Left colon (tissue), 2 donors: ENCODE measurements at regions of chr14 and their contacts with region 1.

Region 1: DNA sequence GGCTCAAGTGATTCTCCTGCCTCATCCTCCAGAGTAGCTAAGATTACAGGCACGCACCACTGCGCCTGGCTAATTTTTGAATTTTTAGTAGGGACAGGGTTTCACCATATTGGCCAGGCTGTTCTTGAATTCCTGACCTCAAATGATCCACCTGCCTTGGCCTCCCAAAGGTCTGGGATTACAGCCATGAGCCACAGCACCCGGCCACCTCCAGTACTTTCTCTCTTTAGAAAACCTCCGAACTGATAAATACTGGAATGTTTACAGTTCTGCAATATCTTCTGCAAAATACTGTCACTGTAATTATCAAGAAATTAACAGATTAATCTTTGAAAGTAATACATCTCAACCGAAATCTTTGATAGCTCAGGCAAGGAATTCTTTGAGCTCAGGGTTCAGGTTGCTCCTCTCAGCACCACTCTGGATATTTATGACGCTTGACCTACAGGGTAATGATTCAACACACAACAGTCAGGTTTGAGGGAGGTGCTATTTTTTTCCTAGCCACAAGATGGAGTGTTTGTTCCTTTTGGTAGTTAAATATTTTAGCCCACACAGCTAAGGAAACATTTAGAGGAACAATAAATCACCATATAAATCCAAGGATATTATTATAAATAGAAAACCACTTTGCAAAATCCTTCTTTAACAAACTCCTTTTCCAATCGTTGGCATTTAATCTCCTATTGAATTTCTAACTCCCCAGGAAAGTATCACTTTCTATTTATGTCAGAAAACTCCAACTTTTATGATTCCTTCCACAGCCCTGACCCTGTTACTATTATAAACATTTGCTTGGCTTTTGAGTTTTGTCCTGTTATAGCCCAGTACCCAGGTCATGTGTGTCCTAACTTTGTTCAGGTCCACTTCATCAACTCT is 48.6 kb upstream of the GTF2A1 start:
- DNase-seq: no peak
- ATAC-seq: peak; percentile 94

Region 2: GRCh38 chr14:81187832-81188522 is 81.4 kb before region 1 on chr14:
- intact Hi-C with region 1: no loop called
- DNase-seq: no peak
- ATAC-seq: no peak

Region 3: DNA sequence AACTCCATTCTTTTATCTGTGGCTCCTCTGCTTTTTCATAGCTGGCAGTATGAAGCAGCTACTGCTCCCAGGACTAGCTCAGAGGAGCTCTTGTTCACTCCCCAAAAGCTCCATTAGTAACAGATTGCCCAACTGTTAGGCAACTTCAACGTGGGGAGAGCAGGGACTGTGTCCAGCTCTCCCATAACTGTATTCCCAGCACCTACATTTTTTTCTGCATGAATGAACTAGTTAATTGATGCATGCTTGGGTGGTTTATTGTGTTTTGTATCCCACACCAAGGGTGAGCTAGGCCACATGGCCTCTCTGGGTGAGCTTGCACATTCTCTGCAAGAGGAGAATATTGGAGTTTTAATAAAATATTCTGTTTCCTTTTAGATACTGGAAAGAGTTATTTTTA is 115.6 kb after region 1 on chr14:
- intact Hi-C with region 1: no loop called
- DNase-seq: no peak
- ATAC-seq: no peak

Region 4: DNA sequence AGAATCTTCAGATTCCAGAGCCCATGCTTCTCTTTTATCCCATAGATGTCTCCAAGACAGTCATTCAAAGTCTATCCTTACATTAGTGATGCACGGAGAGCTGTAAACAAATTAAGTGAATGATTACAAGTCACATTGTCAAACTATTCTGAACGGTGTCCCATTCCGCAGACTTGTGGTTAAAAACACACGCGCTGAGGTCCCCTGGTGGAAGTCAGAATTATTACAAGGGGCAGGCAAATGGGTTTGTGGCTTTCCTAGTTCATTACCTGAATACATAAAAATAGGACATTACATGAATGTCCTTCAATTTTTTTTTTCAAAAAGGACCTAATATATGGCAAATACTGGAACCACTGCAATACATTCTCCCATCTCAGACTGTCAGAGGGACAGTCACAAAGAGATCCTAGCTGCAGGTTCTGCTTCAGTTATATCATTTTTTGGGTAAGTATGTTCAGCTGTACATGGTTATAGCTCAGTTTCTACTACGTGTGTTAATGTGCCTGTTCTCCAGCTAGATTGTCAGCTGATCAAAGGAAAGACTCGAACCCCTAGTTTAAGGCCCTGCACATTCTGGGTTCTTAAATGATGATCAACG is 183.9 kb after region 1 on chr14:
- intact Hi-C with region 1: loop called (anchors 2 to 10 kb)
- DNase-seq: peak in 1 of 2 donors; percentile 59
- ATAC-seq: peak; percentile 75